MCF 10A (cell line): ENCODE measurements at regions of chr15 and their contacts with region 1.

Region 1: DNA sequence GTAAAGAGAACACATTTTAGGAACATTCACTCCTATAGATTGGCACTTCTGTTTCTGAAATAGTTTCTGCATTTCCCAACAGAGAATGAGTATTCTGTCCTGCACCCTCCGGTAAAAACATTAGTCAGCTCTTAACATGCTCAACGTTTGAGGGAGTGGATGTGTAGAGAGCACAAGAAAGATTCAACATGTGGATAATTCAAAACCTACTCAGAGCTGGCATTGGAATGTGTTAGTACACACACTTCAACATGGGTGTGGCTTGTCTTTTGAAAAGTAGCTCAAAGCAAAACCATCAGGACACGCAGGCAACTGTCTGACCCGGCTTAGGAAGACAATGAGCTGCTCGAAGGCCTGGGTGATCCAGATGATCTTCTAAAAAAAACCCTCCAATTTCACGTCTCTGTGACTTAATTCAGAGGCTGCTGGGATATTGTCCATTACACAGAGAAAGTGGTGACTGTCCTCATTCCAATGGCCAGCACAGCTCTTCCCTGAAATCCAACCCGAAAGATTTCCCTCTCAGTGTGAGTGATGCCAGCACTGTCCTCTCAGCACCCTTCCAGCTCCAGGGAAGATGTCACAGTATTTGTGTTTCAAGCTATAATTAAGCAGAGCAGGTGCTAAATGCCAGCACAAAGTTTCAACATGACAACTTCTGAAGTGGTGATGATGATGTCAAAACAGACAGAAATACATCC is 18.1 kb downstream of the FBN1 start:
- DNase-seq: peak; percentile 79
- H3K4me3 Mint-ChIP-seq: peak overlapping the region; percentile 55
- H3K27ac Mint-ChIP-seq: peak overlapping the region; percentile 94
- H3K4me1 Mint-ChIP-seq: peaks cover 5% of the 10 kb centered on the region
- H3K27me3 Mint-ChIP-seq: no peaks in the 10 kb centered on the region
- CTCF ChIP-seq: no peak

Region 2: DNA sequence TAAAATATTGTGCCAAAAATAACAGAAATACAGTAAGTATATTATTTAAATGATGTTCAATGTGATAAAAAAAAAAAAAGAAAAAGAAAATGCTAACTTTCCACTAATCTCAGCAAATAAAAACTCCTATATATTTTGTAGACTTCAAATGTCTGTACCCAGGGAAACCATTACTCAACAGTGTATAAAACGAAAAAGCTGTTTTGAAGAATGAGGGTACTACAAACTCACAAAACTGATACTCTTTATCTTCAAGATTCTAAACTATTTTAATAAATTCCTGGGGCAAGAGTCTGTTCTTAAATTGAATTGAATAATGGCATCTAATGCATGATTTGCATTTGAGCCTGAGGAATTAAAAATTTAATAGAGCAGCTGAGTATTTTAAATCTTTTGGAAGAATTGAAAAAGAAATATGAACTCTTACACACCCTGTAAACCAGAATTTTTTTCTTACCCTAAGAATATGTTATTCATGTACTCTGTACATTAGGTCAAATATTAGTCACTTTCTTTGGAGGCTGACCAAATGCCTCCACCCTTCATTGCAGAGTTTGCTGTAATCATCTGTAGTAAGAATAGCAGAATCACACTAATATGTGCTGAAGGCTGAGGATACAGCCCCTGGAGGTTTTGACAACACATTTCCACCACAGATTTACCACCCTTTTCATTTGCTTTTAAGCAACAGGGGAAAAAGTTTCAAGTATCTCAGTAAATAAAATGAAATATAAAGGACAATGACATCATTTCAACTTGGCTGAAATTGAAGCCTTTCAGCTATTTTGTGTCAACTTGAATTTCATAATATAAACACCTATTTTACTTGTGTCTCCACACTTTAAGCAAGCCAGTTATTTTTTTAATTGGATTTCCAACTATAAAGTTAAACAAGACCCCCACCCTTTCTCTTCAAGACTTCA is 61.6 kb before region 1 on chr15:
- CTCF ChIA-PET with region 1: no interaction called
- POLR2A ChIA-PET with region 1: interaction called, 18 read pairs
- intact Hi-C with region 1: loop called (anchors 2 kb)
- DNase-seq: peak; percentile 85
- H3K4me3 Mint-ChIP-seq: peak overlapping the region; percentile 14
- H3K27ac Mint-ChIP-seq: peak overlapping the region; percentile 94
- H3K4me1 Mint-ChIP-seq: peaks cover 39% of the 10 kb centered on the region
- H3K27me3 Mint-ChIP-seq: no peaks in the 10 kb centered on the region
- CTCF ChIP-seq: no peak